ENCODE measurements at regions of chr1 and their contacts with region 1.

Region 1: GRCh38 chr1:44812822-44813543 is 4.7 kb downstream of the BTBD19 start:
- H3K4me3 ChIP-seq: no peak overlapping the region
- H3K27ac ChIP-seq: no peak overlapping the region
- H3K4me1 ChIP-seq: peaks cover 13% of the 10 kb centered on the region
- CTCF ChIP-seq: no peak

Region 2: GRCh38 chr1:44696789-44697345 is 116.1 kb before region 1 on chr1:
- CTCF ChIA-PET with region 1: no interaction called
- POLR2A ChIA-PET with region 1: no interaction called
- H3K4me3 ChIP-seq: no peak overlapping the region
- H3K27ac ChIP-seq: no peak overlapping the region
- H3K4me1 ChIP-seq: 0 out of 2 replicates have a peak, but pooled peaks cover 2% of the 10 kb centered on the region
- CTCF ChIP-seq: no peak

Region 3: DNA sequence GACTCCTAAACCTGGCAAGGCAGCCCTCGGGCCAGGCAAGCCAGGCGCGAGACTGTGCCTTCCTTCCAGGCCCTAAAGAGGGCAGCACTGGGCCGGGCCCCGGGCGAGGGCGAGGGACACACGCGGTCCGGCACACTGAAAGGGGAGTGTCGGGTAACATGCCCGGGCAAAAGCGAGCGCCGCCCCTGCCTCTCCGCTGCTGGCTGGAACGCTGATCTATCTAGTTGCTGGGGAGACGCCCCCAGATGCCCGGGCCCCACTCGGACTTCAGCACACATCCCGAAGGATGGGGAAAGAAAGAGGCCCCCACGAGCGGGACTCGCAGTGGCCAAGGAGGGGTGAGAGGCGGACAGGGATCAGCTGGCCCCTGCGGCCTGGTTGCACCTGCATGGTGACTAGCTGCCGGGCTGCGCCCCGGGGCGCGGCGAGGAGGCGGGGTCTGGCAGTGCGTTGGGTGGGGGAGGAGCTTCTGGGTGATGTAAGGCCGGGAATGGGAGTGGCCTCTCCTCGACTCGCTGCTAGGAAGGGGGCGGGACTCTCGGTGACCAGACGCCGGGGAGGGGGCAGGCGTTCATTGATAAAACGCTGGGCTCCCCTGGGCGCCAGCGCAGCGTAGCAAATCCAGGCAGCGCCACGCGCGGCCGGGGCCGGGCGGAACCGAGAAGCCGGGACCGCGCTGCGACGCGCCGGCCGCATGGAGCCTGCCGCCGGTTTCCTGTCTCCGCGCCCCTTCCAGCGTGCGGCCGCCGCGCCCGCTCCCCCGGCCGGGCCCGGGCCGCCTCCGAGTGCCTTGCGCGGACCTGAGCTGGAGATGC is 13.0 kb before region 1 on chr1 and contains the start of gene PLK3:
- CTCF ChIA-PET with region 1: interaction called, 28 read pairs
- POLR2A ChIA-PET with region 1: interaction called, 62 read pairs
- H3K4me3 ChIP-seq: peak within 1 kb of the TSS; percentile 70
- H3K27ac ChIP-seq: peak within 1 kb of the TSS; percentile 80
- H3K4me1 ChIP-seq: no peaks in the 10 kb centered on the region
- CTCF ChIP-seq: peak; percentile 97

Measured in HEK293 (cell line).